MCF 10A (cell line): ENCODE measurements at regions of chr11 and their contacts with region 1.

Region 1: GRCh38 chr11:16613512-16614381 is 124.7 kb upstream of the C11orf58 start:
- DNase-seq: peak; percentile 84
- H3K4me3 Mint-ChIP-seq: peak overlapping the region; percentile 73
- H3K27ac Mint-ChIP-seq: peak overlapping the region; percentile 49
- H3K4me1 Mint-ChIP-seq: peaks cover 16% of the 10 kb centered on the region
- H3K27me3 Mint-ChIP-seq: peaks cover 23% of the 10 kb centered on the region
- CTCF ChIP-seq: peak; percentile 95

Region 2: GRCh38 chr11:15629690-15630321 is 983.9 kb before region 1 on chr11:
- CTCF ChIA-PET with region 1: interaction called, 5 read pairs
- POLR2A ChIA-PET with region 1: no interaction called
- intact Hi-C with region 1: loop called (anchors 1 kb)
- DNase-seq: peak; percentile 57
- H3K4me3 Mint-ChIP-seq: no peak overlapping the region
- H3K27ac Mint-ChIP-seq: no peak overlapping the region
- H3K4me1 Mint-ChIP-seq: peaks cover 7% of the 10 kb centered on the region
- H3K27me3 Mint-ChIP-seq: peaks cover 51% of the 10 kb centered on the region
- CTCF ChIP-seq: peak; percentile 34

Region 3: DNA sequence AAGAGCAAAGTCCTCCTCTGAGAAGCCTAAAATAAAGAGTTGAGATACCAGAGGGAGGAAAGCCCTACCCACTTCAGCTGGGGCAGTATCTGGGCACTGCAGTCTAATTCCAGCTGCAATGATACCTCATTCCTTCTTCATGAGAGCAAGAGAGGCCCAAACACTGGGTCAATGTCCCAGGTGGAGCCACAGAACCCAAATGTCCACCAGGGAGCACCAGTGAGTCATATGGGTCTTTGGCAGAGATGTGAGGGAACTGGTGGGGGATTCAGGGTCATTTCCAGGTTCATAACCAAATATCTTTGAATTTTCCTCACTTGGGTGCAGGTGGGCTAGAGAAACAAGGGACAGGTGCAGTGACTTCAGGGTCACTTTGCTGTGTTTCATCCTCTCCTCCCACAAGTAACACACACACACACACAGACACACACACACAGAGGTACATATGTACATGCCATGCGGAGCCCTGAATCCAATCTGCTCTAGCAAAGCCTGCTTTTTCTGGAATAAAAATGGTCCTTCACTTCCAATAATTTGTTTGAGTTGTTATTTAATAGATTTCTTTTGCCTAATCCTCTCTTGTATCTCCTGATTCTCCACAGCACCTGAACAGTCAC is 842.8 kb before region 1 on chr11:
- CTCF ChIA-PET with region 1: interaction called, 8 read pairs
- POLR2A ChIA-PET with region 1: no interaction called
- intact Hi-C with region 1: loop called (anchors 1 kb)
- DNase-seq: peak; percentile 65
- H3K4me3 Mint-ChIP-seq: no peak overlapping the region
- H3K27ac Mint-ChIP-seq: no peak overlapping the region
- H3K4me1 Mint-ChIP-seq: no peaks in the 10 kb centered on the region
- H3K27me3 Mint-ChIP-seq: peaks cover 28% of the 10 kb centered on the region
- CTCF ChIP-seq: peak; percentile 67

Region 4: GRCh38 chr11:15852179-15852578 is 761.6 kb before region 1 on chr11:
- CTCF ChIA-PET with region 1: interaction called, 12 read pairs
- POLR2A ChIA-PET with region 1: interaction called, 3 read pairs
- intact Hi-C with region 1: loop called (anchors 1 kb)
- DNase-seq: peak; percentile 43
- H3K4me3 Mint-ChIP-seq: no peak overlapping the region
- H3K27ac Mint-ChIP-seq: no peak overlapping the region
- H3K4me1 Mint-ChIP-seq: no peaks in the 10 kb centered on the region
- H3K27me3 Mint-ChIP-seq: no peaks in the 10 kb centered on the region
- CTCF ChIP-seq: peak; percentile 56

Region 5: GRCh38 chr11:16469968-16470367 is 143.8 kb before region 1 on chr11:
- CTCF ChIA-PET with region 1: no interaction called
- POLR2A ChIA-PET with region 1: no interaction called
- intact Hi-C with region 1: no loop called
- DNase-seq: no peak
- H3K4me3 Mint-ChIP-seq: no peak overlapping the region
- H3K27ac Mint-ChIP-seq: no peak overlapping the region
- H3K4me1 Mint-ChIP-seq: peaks cover 21% of the 10 kb centered on the region
- H3K27me3 Mint-ChIP-seq: no peaks in the 10 kb centered on the region
- CTCF ChIP-seq: no peak

Region 6: DNA sequence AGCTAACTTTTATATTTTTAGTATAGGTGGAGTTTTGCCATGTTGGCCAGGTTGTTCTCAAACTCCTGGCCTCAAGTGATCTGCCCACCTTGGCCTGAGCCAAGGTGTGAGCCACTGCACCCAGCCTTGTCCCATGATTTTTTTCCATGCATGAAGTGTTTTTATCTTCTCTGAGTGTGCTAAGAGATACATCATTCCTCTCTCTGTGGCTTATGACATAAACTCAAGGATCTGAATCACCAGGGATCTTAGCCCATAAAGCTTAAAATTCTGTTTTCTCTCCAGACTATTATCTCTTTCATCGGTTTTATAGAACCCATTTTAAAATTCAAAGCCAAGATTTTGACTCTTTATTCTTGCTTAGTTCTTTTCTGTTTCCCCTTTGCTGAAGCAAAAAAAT is 76.3 kb after region 1 on chr11:
- CTCF ChIA-PET with region 1: no interaction called
- POLR2A ChIA-PET with region 1: no interaction called
- intact Hi-C with region 1: no loop called
- DNase-seq: no peak
- H3K4me3 Mint-ChIP-seq: no peak overlapping the region
- H3K27ac Mint-ChIP-seq: no peak overlapping the region
- H3K4me1 Mint-ChIP-seq: no peaks in the 10 kb centered on the region
- H3K27me3 Mint-ChIP-seq: peaks cover 26% of the 10 kb centered on the region
- CTCF ChIP-seq: no peak

Region 7: GRCh38 chr11:16750417-16750816 is 136.7 kb after region 1 on chr11:
- CTCF ChIA-PET with region 1: no interaction called
- POLR2A ChIA-PET with region 1: no interaction called
- intact Hi-C with region 1: no loop called
- DNase-seq: no peak
- H3K4me3 Mint-ChIP-seq: no peak overlapping the region
- H3K27ac Mint-ChIP-seq: no peak overlapping the region
- H3K4me1 Mint-ChIP-seq: peaks cover 9% of the 10 kb centered on the region
- H3K27me3 Mint-ChIP-seq: no peaks in the 10 kb centered on the region
- CTCF ChIP-seq: no peak